Activated naive CD4-positive, alpha-beta T cell treated with anti-CD3 and anti-CD28 coated beads for 36 hours (primary cell): ENCODE measurements at regions of chr12 and their contacts with region 1.

Region 1: DNA sequence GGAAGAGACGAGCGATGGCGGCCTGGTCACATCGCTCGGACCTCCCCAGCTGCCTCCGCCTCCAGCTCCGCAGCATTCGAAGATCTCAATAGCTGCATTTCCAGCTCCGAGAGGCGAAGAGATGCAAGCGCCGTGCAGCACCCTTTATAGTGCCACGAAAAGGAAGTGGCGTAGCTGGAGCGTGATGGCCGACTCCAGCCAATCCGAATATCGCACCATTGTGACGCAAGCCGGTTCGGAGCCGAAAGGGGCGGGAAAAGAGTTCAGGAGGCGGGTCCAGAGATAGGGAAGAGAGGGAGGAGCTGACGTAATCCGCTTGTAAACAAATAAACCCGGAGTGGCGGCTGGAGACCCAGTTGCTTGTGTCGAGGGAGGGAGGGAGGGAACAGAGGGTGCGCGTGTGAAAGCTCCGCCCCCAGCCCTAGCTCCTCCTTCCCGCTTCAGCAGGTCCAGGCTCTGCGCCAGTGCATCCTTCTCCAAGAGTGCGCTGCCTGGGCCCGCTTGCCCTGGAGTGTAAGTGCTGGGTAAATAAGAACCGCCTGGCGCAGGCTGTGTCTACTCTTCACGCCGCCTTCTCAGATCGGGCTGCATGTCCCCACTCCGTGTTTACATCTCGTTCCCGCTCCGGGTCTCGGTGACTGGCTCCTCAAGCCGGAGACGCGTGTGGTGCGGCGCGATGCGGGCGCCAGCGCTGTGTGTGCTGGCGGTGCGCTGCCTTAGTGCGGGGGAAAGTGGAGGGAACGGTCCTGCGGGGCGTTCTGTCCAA is at the start of gene BTG1:
- DNase-seq: peak; percentile 100
- H3K4me3 Mint-ChIP-seq: peak within 1 kb of the TSS; percentile 100
- H3K27ac Mint-ChIP-seq: peak within 1 kb of the TSS; percentile 100
- H3K4me1 Mint-ChIP-seq: peaks cover 27% of the 10 kb centered on the region
- H3K27me3 Mint-ChIP-seq: no peaks in the 10 kb centered on the region
- total RNA-seq, gene BTG1: 218 to 223 TPM

Region 2: GRCh38 chr12:91687052-91688017 is 458.6 kb before region 1 on chr12:
- CTCF ChIA-PET with region 1: no interaction called
- intact Hi-C with region 1: loop called (anchors 1 kb)
- DNase-seq: peak; percentile 42
- H3K4me3 Mint-ChIP-seq: no peak overlapping the region
- H3K27ac Mint-ChIP-seq: peak overlapping the region; percentile 20
- H3K4me1 Mint-ChIP-seq: peaks cover 16% of the 10 kb centered on the region
- H3K27me3 Mint-ChIP-seq: no peaks in the 10 kb centered on the region

Region 3: DNA sequence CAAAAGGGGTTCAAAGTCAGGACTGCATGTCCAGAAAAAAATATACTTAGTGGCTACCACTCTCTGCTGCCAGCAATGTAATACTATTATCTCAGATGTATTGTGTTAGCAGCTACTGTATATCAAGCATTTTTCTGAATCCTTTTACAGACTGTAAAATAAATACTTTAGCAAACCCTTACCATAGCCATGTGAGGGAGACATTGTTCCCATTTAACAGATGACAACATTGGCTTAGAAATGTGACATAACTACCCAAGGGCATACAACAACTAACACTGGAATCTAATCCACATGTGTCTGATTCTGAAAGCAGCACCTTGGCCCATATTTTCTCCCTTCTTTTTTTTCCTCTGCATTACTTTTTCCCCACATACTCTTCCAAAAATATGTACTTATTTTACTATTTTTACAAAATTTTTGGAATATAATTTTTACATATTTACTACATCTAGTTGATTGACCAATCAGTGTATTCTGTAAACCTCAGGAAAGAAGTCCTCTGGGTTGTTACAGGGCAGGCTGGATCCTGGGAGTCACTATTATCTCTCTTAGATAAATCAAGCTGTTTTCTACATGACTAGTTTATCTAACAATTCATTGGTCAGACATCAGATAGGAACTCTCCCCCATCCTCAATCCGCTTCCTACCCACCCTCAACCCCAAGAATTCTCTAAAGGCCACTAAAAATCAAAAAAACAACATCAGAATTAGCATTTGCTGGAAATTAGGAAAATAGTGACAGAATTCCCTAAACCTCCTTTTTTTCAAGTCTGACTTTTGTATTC is 154.3 kb before region 1 on chr12:
- CTCF ChIA-PET with region 1: interaction called, 4 read pairs
- intact Hi-C with region 1: loop called (anchors 1 kb)
- DNase-seq: no peak
- H3K4me3 Mint-ChIP-seq: no peak overlapping the region
- H3K27ac Mint-ChIP-seq: no peak overlapping the region
- H3K4me1 Mint-ChIP-seq: peaks cover 61% of the 10 kb centered on the region
- H3K27me3 Mint-ChIP-seq: no peaks in the 10 kb centered on the region

Region 4: GRCh38 chr12:92185052-92185451 is 39.1 kb after region 1 on chr12:
- CTCF ChIA-PET with region 1: interaction called, 3 read pairs
- intact Hi-C with region 1: loop called (anchors 1 kb)
- DNase-seq: peak; percentile 62
- H3K4me3 Mint-ChIP-seq: peak overlapping the region; percentile 36
- H3K27ac Mint-ChIP-seq: peak overlapping the region; percentile 89
- H3K4me1 Mint-ChIP-seq: peaks cover 64% of the 10 kb centered on the region
- H3K27me3 Mint-ChIP-seq: no peaks in the 10 kb centered on the region

Region 5: GRCh38 chr12:92469837-92470236 is 323.9 kb after region 1 on chr12:
- CTCF ChIA-PET with region 1: no interaction called
- intact Hi-C with region 1: loop called (anchors 1 kb)
- DNase-seq: no peak
- H3K4me3 Mint-ChIP-seq: no peak overlapping the region
- H3K27ac Mint-ChIP-seq: peak overlapping the region; percentile 89
- H3K4me1 Mint-ChIP-seq: peaks cover 49% of the 10 kb centered on the region
- H3K27me3 Mint-ChIP-seq: no peaks in the 10 kb centered on the region

Region 6: GRCh38 chr12:92649511-92650227 is 503.8 kb after region 1 on chr12:
- CTCF ChIA-PET with region 1: no interaction called
- intact Hi-C with region 1: loop called (anchors 5 kb)
- DNase-seq: peak; percentile 75
- H3K4me3 Mint-ChIP-seq: no peak overlapping the region
- H3K27ac Mint-ChIP-seq: no peak overlapping the region
- H3K4me1 Mint-ChIP-seq: peaks cover 7% of the 10 kb centered on the region
- H3K27me3 Mint-ChIP-seq: peaks cover 2% of the 10 kb centered on the region